Common myeloid progenitor, CD34-positive (primary cell): ENCODE measurements at regions of chr2 and their contacts with region 1.

Region 1: DNA sequence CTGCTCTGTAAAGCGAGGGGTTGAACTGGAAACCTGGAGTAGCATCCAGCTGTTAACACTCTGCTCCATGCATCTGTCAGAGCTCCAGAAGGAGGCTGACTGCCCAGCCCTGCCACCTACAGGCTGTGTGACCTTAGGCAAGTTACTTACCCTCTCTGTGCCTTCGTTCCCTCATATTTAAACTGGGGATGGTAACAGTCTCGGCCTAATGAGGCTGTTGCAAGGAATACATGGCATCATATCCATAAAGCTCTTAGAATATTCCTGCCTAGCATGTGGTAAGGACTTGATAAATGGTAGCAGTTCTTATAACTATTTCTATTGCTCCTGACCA is 80.6 kb downstream of the LRRFIP1 start:
- DNase-seq: no peak
- H3K4me3 ChIP-seq: no peak overlapping the region
- H3K27ac ChIP-seq: peak overlapping the region in 1 of 2 experiments; percentile 1
- H3K4me1 ChIP-seq: peaks cover 8 to 47% (median 42%) of the 10 kb centered on the region in 4 experiments
- H3K27me3 ChIP-seq: no peaks in the 10 kb centered on the region

Region 2: GRCh38 chr2:237723602-237724001 is 15.6 kb after region 1 on chr2:
- CTCF ChIA-PET with region 1: interaction called, 12 read pairs
- POLR2A ChIA-PET with region 1: no interaction called
- DNase-seq: peak in 2 of 3 donors; percentile 51 to 58
- H3K4me3 ChIP-seq: no peak overlapping the region
- H3K27ac ChIP-seq: no peak overlapping the region
- H3K4me1 ChIP-seq: peaks cover 0 to 27% (median 10%) of the 10 kb centered on the region in 4 experiments
- H3K27me3 ChIP-seq: no peaks in the 10 kb centered on the region